ENCODE measurements at regions of chr2 and their contacts with region 1.

Region 1: DNA sequence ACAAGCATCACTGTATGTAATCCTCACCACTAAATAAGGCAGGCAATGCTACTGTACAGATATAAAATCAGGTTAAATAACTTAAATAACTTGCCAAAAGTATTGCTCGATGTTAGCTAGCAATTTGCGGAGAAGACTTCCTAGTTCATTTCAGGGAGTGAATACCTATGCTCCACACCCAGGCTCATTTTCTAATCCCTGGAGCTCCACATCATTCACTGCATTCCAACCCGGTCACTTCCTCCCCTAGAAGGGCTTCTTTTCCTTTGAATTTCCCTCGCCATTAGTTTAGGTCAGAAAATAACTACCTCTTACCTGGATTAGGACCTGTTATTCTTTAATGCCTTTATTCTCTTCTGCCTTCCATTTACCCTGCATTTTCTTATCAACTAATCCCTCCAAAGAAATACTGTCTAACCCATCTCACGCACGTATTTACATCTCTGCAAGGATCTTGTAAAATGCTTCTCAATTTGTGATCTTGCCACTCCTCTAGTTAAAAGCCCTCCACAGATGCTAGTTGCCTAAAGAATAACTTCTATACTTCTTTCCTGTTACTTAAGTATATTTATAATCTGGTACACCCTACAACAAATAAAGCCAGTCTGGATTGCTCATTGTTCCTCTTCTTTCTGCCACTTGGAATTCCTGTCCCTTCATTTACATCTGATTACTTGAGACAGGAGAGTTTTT is 599.8 kb downstream of the NRXN1 start:
- DNase-seq: no peak
- ATAC-seq: no peak

Region 2: GRCh38 chr2:49004036-49004626 is 1428.0 kb before region 1 on chr2:
- intact Hi-C with region 1: loop called in 1 of 2 experiments (anchors 5 kb)
- DNase-seq: no peak
- ATAC-seq: no peak

Region 3: GRCh38 chr2:50291610-50292009 is 140.5 kb before region 1 on chr2:
- intact Hi-C with region 1: no loop called
- DNase-seq: no peak
- ATAC-seq: no peak